GM18951 (cell line): ENCODE measurements at regions of chr18 and their contacts with region 1.

Region 1: GRCh38 chr18:11040823-11041656 is 108.3 kb downstream of the PIEZO2 start:
- POLR2A ChIP-seq: no peak

Region 2: GRCh38 chr18:10856146-10856545 is 184.9 kb before region 1 on chr18:
- in situ Hi-C with region 1: loop called (anchors 5 kb)
- POLR2A ChIP-seq: no peak

Region 3: GRCh38 chr18:10995550-10995949 is 45.5 kb before region 1 on chr18:
- in situ Hi-C with region 1: no loop called
- POLR2A ChIP-seq: no peak